ENCODE measurements at regions of chr6 and their contacts with region 1.

Region 1: DNA sequence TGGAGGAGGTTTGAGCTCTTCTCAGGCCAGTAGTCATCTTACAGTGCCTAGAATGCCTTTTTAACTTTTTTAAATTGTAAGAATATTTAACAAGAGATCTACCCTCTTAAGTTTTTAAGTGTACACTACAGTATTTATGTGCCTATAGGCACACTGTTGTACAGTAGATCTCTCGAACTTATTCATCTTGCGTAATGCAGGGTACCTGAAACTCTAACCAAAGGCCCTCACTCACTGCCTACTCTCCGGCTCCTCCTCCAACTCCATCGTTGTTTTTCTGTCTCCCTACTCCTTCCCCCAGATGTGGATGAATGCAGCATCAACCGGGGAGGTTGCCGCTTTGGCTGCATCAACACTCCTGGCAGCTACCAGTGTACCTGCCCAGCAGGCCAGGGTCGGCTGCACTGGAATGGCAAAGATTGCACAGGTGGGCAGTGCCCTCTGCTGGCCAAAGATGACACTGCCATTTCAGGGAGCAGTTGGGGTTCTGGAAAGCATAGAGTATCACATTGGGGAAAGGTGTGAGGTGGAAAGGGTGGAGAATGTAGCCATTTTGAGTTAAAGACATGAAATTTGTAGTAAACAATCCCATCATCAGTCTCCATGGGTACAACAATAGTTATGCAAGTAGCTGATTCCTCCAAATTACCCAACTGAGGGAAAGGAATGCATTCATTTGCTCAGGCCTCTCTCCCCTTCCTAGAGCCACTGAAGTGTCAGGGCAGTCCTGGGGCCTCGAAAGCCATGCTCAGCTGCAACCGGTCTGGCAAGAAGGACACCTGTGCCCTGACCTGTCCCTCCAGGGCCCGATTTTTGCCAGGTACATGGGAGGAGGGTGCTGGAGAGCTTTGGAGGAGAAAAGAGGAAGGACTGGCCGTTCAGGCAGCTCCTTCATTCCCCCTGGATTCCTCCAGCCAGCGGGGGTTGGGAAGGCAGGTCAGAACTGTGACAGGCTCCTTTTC is 18.4 kb upstream of the ZNF76 start:
- DNase-seq: no peak
- ATAC-seq: peak; percentile 92
- H3K4me3 ChIP-seq: no peak overlapping the region
- H3K27ac ChIP-seq: no peak overlapping the region
- H3K4me1 ChIP-seq: peaks cover 2% of the 10 kb centered on the region
- H3K27me3 ChIP-seq: no peaks in the 10 kb centered on the region
- CTCF ChIP-seq: peak; percentile 98

Region 2: DNA sequence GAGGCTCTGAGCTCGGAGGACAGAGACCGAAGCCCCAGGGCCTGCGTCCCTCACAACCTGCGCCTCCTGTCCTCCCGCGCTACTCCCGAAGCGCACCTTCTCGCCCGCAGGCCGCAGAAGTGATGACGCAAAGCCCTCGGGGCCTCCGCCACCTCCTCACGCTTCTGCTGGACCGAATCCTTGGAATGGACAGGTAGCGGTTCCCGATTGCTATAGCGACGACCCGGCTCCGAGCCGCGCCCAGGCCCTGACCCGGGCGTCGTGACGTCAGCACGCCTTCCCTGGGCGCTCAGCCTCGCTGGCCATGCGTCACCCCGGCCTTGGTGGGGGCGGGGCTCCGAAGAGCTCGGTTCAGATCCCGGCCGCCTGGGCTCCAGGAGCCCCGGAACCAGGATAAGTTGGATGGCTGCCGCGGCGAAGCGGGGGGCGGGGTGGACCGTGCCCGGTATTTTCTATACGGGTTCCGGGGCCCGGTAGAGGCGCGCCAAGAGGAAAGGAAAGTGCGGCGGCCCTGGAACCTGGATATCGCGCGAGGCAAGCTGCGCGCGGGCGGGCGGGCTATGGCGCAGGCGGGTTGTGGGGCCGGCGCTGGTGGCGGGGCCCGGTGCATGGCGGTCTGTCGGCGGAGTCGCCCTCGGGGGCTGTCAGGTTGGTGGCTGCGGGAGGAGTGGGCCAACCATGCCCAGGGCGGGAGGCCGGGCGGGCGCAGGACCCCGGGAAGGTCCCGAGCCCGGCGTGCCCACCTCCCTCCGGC is 18.2 kb after region 1 on chr6 and contains the start of gene ZNF76:
- CTCF ChIA-PET with region 1: interaction called, 3 read pairs
- POLR2A ChIA-PET with region 1: interaction called, 11 read pairs
- in situ Hi-C with region 1: no loop called
- intact Hi-C with region 1: no loop called
- DNase-seq: peak; percentile 72
- ATAC-seq: peak; percentile 98
- H3K4me3 ChIP-seq: peak within 1 kb of the TSS; percentile 74 to 82
- H3K27ac ChIP-seq: peak within 1 kb of the TSS; percentile 99
- H3K4me1 ChIP-seq: peaks cover 20% of the 10 kb centered on the region
- H3K27me3 ChIP-seq: no peaks in the 10 kb centered on the region
- CTCF ChIP-seq: no peak
- total RNA-seq, gene ZNF76: 41.5 TPM

Region 3: GRCh38 chr6:35370124-35370741 is 129.1 kb after region 1 on chr6:
- CTCF ChIA-PET with region 1: no interaction called
- POLR2A ChIA-PET with region 1: no interaction called
- in situ Hi-C with region 1: no loop called
- intact Hi-C with region 1: no loop called
- DNase-seq: no peak
- ATAC-seq: peak; percentile 53
- H3K4me3 ChIP-seq: no peak overlapping the region
- H3K27ac ChIP-seq: no peak overlapping the region; the same call in 1 of the 2 replicates
- H3K4me1 ChIP-seq: 0 out of 2 replicates have a peak, but pooled peaks cover 8% of the 10 kb centered on the region
- H3K27me3 ChIP-seq: no peaks in the 10 kb centered on the region
- CTCF ChIP-seq: no peak

Measured in Panc1 (cell line).